Ascending aorta (tissue), 2 donors: ENCODE measurements at regions of chr10 and their contacts with region 1.

Region 1: DNA sequence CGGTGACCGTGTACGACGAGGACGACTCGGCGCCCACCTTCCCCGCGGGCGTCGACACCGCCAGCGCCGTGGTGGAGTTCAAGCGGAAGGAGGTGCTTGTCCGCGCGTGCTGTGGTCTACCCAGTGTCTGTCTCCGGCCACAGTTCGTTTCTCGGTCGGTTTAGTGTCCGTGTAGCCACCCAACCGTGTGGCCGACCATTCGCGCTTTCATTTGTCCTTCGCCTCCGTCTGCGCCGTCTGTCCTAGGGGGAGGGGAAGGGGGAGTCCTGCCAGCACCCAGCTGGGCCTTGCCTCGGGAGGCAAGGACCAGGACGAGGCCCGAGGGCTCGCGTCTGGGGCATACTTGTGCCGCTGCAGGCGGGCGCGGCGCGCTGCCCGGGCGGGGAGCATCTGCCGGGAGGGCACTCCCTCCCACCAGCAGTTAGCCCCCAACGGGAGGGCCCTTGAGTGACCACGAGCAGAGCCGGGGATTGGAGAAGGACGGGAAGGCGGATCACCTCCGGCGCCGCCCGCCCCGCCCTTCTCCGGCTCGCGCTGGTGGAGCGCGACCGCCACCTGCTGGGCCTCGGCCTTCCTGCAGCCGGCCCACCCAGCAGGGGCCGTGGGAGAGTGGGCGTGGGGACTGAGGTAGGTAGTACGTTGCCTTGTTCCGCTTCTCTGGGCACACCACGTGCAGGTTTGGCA is 28.4 kb downstream of the RET start:
- DNase-seq: peak in 1 of 2 donors; percentile 84
- H3K4me3 ChIP-seq: peak overlapping the region; percentile 73 to 74
- H3K27ac ChIP-seq: no peak overlapping the region
- H3K4me1 ChIP-seq: peaks cover 0 to 3% of the 10 kb centered on the region in 2 donors
- H3K27me3 ChIP-seq: no peaks in the 10 kb centered on the region
- CTCF ChIP-seq: peak; percentile 96 to 99 (median 99)

Region 2: GRCh38 chr10:42866115-42866995 is 238.9 kb before region 1 on chr10:
- intact Hi-C with region 1: loop called (anchors 1 kb)
- DNase-seq: no peak
- H3K4me3 ChIP-seq: peak overlapping the region; percentile 21 to 34
- H3K27ac ChIP-seq: no peak overlapping the region
- H3K4me1 ChIP-seq: no peaks in the 10 kb centered on the region
- H3K27me3 ChIP-seq: no peaks in the 10 kb centered on the region
- CTCF ChIP-seq: peak; percentile 25 to 52 (median 31)

Region 3: GRCh38 chr10:43138757-43139241 is 33.6 kb after region 1 on chr10:
- intact Hi-C with region 1: no loop called
- DNase-seq: no peak
- H3K4me3 ChIP-seq: peak overlapping the region; percentile 85 to 87
- H3K27ac ChIP-seq: peak overlapping the region; percentile 92 to 98
- H3K4me1 ChIP-seq: peaks cover 0 to 15% of the 10 kb centered on the region in 2 donors
- H3K27me3 ChIP-seq: no peaks in the 10 kb centered on the region
- CTCF ChIP-seq: peak in 1 of 3 experiments; percentile 11

Region 4: GRCh38 chr10:43204943-43205671 is 99.9 kb after region 1 on chr10:
- intact Hi-C with region 1: no loop called
- DNase-seq: peak; percentile 5 to 61
- H3K4me3 ChIP-seq: no peak overlapping the region
- H3K27ac ChIP-seq: no peak overlapping the region
- H3K4me1 ChIP-seq: peaks cover 0 to 2% of the 10 kb centered on the region in 2 donors
- H3K27me3 ChIP-seq: no peaks in the 10 kb centered on the region
- CTCF ChIP-seq: peak in 1 of 3 experiments; percentile 48